ENCODE measurements at regions of chr9 and their contacts with region 1.

Region 1: DNA sequence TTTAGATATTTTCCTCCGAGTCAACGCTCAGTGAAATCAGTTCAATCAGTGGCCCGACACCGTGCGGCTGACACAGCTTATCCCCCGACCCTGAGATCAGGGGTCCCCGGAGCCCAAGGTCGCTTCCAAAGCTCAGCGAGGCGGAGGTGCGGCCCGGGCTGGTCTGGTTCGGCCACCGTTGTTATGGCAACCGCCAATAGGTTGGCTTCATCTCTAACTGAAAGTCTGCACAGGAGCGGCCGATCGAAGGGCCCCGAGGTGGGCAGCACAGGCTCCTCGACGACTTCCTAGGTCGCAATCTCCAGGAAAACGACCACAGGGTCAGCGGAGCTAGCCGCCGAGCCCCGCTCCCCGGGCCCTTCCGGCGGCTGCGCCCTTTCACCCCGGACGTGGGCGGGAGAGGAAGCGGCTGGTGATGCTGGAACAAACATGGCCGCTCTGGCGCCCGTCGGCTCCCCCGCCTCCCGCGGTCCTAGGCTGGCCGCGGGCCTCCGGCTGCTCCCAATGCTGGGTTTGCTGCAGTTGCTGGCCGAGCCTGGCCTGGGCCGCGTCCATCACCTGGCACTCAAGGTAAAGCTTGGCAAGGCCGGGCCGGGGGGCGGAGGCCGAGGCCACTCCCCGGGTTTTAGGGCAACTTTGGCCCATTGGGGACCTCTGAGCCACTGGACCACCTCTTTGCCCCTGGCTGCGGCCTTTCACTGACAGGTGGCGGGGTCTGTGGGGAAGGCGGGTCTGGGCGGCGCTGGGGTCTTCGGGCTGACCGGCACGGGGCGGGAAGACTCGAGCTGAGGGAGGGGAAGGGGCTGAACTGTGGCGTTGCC is at the start of gene GPR107:
- DNase-seq: peak; percentile 73
- total RNA-seq, gene GPR107: 26.1 and 31.3 TPM in 2 replicates

Region 2: DNA sequence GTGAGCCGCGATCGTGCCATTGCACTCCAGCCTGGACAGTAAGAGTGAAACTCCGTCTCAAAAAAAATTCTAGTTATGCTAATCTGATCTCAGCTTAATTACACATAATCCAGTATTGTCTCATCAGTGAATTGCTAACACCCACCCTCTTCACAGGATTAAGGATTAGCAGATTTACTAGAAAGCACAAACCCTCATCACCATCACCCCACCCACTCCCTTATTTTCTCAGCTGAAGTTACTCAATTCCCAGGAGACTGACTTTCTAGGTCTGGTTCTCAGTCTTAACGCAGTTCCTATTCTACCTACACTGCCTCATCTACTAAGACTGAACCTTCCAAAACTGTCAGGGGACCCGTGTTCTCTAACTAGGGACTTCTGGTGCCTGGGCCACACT is 241.7 kb before region 1 on chr9:
- in situ Hi-C with region 1: no loop called
- DNase-seq: no peak

Region 3: GRCh38 chr9:129962889-129963703 is 90.6 kb before region 1 on chr9:
- in situ Hi-C with region 1: loop called (anchors 25 kb)
- DNase-seq: peak; percentile 91